ENCODE measurements at regions of chr12 and their contacts with region 1.

Region 1: GRCh38 chr12:124551268-124552144 is 15.9 kb downstream of the NCOR2 start:
- DNase-seq: peak; percentile 67 to 87 (median 82)
- H3K4me3 ChIP-seq: peak overlapping the region in 1 of 3 experiments; percentile 46
- H3K4me3 Mint-ChIP-seq: peak overlapping the region; percentile 65 to 76
- H3K27ac ChIP-seq: peak overlapping the region; percentile 58 to 71
- H3K27ac Mint-ChIP-seq: peak overlapping the region; percentile 83 to 95 (median 94)
- H3K4me1 ChIP-seq: peaks cover 68 to 86% of the 10 kb centered on the region in 2 donors
- H3K4me1 Mint-ChIP-seq: peaks cover 88% of the 10 kb centered on the region
- H3K27me3 ChIP-seq: no peaks in the 10 kb centered on the region
- H3K27me3 Mint-ChIP-seq: peaks cover 0 to 2% (median 0%) of the 10 kb centered on the region in 3 donors
- CTCF ChIP-seq: no peak

Region 2: GRCh38 chr12:124506145-124506831 is 45.2 kb before region 1 on chr12:
- intact Hi-C with region 1: loop called (anchors 5 to 10 kb)
- DNase-seq: peak; percentile 71 to 78 (median 75)
- H3K4me3 ChIP-seq: peak overlapping the region in 2 of 3 experiments; percentile 10 to 46
- H3K4me3 Mint-ChIP-seq: peak overlapping the region; percentile 76 to 87
- H3K27ac ChIP-seq: peak overlapping the region; percentile 69 to 70
- H3K27ac Mint-ChIP-seq: peak overlapping the region; percentile 92 to 97 (median 94)
- H3K4me1 ChIP-seq: peaks cover 37 to 58% of the 10 kb centered on the region in 2 donors
- H3K4me1 Mint-ChIP-seq: peaks cover 68% of the 10 kb centered on the region
- H3K27me3 ChIP-seq: no peaks in the 10 kb centered on the region
- H3K27me3 Mint-ChIP-seq: peaks cover 0 to 2% (median 0%) of the 10 kb centered on the region in 3 donors
- CTCF ChIP-seq: no peak

Region 3: DNA sequence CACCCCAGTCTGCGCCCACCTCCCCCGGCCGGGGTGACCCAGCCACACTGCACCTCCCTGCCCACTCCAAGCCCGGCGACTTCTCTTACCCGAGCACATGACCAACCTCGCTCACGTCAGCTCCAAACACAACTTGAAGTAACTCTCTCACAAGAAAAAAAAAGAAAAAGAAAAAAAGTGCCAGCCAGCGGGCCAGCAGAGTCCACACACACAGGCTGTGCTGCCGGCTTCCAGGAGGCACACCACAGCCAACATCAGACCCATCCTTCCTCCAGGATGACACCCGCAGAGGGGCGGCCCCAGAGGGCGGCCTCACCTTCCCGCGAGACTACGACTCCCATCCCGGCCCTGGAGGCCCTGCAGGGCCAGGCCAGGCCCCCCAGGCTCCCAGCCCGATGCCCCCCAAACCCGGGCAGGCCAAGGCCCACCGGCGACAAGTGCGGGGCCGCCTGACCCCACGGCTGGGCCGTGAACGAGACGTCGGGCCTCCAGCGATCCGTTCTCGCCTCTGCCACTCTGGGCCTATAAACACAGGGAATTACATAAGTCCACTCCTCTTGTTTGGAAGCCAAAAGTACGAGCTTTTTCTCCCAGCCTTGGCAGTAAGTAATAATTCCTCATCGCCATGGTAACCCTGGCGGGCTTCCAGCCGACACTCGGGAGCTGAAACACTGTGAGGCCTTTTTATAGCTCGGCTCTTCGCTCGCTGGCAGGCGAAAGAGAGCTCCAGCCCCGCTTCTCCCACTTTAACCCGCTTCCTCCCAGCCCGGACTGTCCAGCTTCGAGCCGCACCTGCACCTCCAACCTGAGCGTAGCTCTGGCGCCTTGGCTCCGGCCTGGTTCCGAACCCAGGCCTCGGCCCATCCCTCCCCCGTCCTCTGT is 33.2 kb before region 1 on chr12:
- intact Hi-C with region 1: loop called in 1 of 2 experiments (anchors 5 kb)
- DNase-seq: peak; percentile 52 to 67 (median 54)
- H3K4me3 ChIP-seq: peak overlapping the region in 1 of 3 experiments; percentile 3
- H3K4me3 Mint-ChIP-seq: peak overlapping the region; percentile 61 to 68
- H3K27ac ChIP-seq: peak overlapping the region; percentile 26 to 59
- H3K27ac Mint-ChIP-seq: peak overlapping the region in 6 of 7 donors; percentile 38 to 86 (median 76)
- H3K4me1 ChIP-seq: peaks cover 33 to 38% of the 10 kb centered on the region in 2 donors
- H3K4me1 Mint-ChIP-seq: peaks cover 50% of the 10 kb centered on the region
- H3K27me3 ChIP-seq: no peaks in the 10 kb centered on the region
- H3K27me3 Mint-ChIP-seq: peaks cover 4 to 13% (median 5%) of the 10 kb centered on the region in 3 donors
- CTCF ChIP-seq: no peak

Region 4: DNA sequence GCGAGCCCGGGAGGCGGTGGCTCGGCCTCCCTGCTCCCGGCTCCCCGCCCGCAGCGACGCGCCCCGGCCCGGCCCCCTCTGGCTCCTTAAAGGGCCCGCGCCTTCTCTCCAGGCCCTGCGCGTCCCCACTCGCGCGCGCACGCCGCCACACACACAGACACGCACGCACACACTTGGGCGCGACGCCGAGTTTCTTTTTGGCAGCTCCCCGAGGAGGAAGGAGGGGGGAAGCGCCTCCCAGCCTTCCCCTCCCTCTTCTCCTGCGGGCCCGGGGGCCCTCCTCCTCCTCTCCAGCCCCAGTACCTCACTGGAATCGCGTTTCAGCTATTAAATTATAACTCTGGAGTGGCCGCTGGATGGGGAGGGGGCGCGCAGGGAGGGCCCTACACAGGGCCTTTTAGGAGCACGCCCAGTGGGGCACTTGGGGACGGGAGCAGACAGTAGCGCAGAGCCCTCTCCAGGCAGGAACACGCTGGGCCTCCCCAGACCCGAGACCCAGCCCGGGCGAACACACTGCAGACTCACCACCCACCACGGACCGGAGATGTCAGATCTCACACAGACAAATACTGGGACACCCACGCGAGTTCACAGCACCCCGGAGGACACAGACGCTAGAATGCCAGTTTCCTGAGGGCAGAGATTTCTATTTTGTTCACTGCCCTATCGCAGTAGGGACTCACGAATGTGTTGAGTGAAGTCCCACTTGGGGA is 16.3 kb after region 1 on chr12:
- intact Hi-C with region 1: no loop called
- DNase-seq: peak; percentile 91 to 95 (median 95)
- H3K4me3 ChIP-seq: peak overlapping the region; percentile 14 to 74 (median 24)
- H3K4me3 Mint-ChIP-seq: peak overlapping the region; percentile 77 to 78
- H3K27ac ChIP-seq: peak overlapping the region; percentile 86 to 96
- H3K27ac Mint-ChIP-seq: peak overlapping the region; percentile 94 to 98 (median 96)
- H3K4me1 ChIP-seq: peaks cover 44 to 50% of the 10 kb centered on the region in 2 donors
- H3K4me1 Mint-ChIP-seq: peaks cover 47% of the 10 kb centered on the region
- H3K27me3 ChIP-seq: no peaks in the 10 kb centered on the region
- H3K27me3 Mint-ChIP-seq: no peaks in the 10 kb centered on the region
- CTCF ChIP-seq: no peak